ENCODE measurements at regions of chr7 and their contacts with region 1.

Region 1: GRCh38 chr7:12490117-12490688 is 80.3 kb upstream of the SCIN start:
- DNase-seq: peak in 1 of 2 experiments; percentile 53
- H3K4me3 ChIP-seq: no peak overlapping the region
- H3K27ac ChIP-seq: no peak overlapping the region
- H3K4me1 ChIP-seq: no peaks in the 10 kb centered on the region
- H3K27me3 ChIP-seq: no peaks in the 10 kb centered on the region
- CTCF ChIP-seq: peak; percentile 89

Region 2: GRCh38 chr7:11373546-11374142 is 1116.6 kb before region 1 on chr7:
- CTCF ChIA-PET with region 1: no interaction called
- POLR2A ChIA-PET with region 1: no interaction called
- intact Hi-C with region 1: loop called (anchors 5 kb)
- DNase-seq: no peak
- H3K4me3 ChIP-seq: no peak overlapping the region
- H3K27ac ChIP-seq: no peak overlapping the region
- H3K4me1 ChIP-seq: no peaks in the 10 kb centered on the region
- H3K27me3 ChIP-seq: no peaks in the 10 kb centered on the region
- CTCF ChIP-seq: peak; percentile 77

Region 3: GRCh38 chr7:11831736-11832495 is 658.3 kb before region 1 on chr7 and contains the start of gene THSD7A:
- CTCF ChIA-PET with region 1: interaction called, 4 read pairs
- POLR2A ChIA-PET with region 1: no interaction called
- intact Hi-C with region 1: loop called (anchors 1 kb)
- DNase-seq: peak in 1 of 2 experiments; percentile 68
- H3K4me3 ChIP-seq: peak within 1 kb of the TSS; percentile 53
- H3K27ac ChIP-seq: no peak within 1 kb of the TSS
- H3K4me1 ChIP-seq: no peaks in the 10 kb centered on the region; the same call in 1 of the 2 replicates
- H3K27me3 ChIP-seq: no peaks in the 10 kb centered on the region
- CTCF ChIP-seq: no peak; the same call in 1 of the 2 replicates
- total RNA-seq, gene THSD7A: 1.6 and 4.0 TPM in 2 replicates

Region 4: GRCh38 chr7:12007576-12007975 is 482.6 kb before region 1 on chr7:
- CTCF ChIA-PET with region 1: no interaction called
- POLR2A ChIA-PET with region 1: no interaction called
- intact Hi-C with region 1: no loop called
- DNase-seq: no peak
- H3K4me3 ChIP-seq: no peak overlapping the region
- H3K27ac ChIP-seq: no peak overlapping the region
- H3K4me1 ChIP-seq: no peaks in the 10 kb centered on the region
- H3K27me3 ChIP-seq: no peaks in the 10 kb centered on the region
- CTCF ChIP-seq: no peak

Region 5: GRCh38 chr7:12322284-12322902 is 167.8 kb before region 1 on chr7:
- CTCF ChIA-PET with region 1: interaction called, 3 read pairs
- POLR2A ChIA-PET with region 1: no interaction called
- intact Hi-C with region 1: loop called (anchors 5 kb)
- DNase-seq: no peak
- H3K4me3 ChIP-seq: no peak overlapping the region
- H3K27ac ChIP-seq: no peak overlapping the region
- H3K4me1 ChIP-seq: no peaks in the 10 kb centered on the region
- H3K27me3 ChIP-seq: no peaks in the 10 kb centered on the region
- CTCF ChIP-seq: peak; percentile 88

Region 6: DNA sequence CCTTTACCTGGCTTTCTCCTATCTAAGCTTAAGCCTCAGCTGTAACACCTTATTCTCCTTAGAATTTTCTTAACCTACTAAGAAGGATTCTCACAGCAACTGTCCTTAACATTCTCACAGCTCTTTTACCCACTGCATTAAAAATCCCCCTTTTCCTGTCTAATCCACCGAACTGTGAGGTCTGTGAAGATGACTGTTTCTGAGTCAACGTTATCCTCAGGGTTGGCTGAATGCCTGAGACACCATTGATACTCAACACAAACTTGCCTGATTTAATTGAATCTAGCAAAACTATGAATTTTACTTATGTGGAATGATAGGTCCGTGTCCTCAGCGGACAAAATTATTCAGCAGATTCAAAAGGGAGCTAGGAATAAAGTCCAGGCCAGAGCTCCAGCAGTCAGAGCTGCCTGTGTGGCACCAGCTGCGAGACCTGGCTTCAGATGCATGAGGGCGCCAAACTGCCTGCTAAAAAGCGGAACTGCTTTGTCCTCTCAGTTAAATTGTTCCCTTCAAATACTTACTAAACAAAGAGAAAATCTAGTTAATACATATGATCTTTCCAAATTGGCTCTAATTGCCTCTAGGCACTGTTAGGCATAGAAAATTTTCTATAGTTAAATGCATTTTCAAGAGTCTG is 53.2 kb before region 1 on chr7:
- CTCF ChIA-PET with region 1: interaction called, 4 read pairs
- POLR2A ChIA-PET with region 1: no interaction called
- intact Hi-C with region 1: loop called (anchors 10 kb)
- DNase-seq: no peak
- H3K4me3 ChIP-seq: no peak overlapping the region
- H3K27ac ChIP-seq: no peak overlapping the region
- H3K4me1 ChIP-seq: no peaks in the 10 kb centered on the region
- H3K27me3 ChIP-seq: no peaks in the 10 kb centered on the region
- CTCF ChIP-seq: no peak

Region 7: DNA sequence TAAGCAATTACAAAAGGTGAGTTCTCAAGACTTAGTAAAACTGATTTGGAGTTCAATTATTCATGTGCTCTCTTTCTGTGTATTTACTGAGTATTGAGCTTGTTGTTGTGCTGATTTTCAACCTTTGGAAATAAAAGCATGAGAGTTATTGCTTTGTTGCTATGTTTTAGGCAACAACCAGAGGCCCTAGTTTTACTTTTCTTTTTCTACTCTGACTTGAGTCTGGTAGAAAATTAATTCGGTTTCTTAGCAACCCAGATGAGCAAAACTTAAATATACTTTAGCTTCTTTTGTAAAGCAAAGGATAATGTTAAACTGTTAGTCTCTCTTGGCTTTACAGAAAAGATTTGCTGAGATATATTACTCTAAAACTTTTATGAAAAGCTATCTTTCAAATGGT is 13.9 kb after region 1 on chr7:
- CTCF ChIA-PET with region 1: interaction called, 13 read pairs
- POLR2A ChIA-PET with region 1: no interaction called
- intact Hi-C with region 1: no loop called
- DNase-seq: no peak
- H3K4me3 ChIP-seq: no peak overlapping the region
- H3K27ac ChIP-seq: no peak overlapping the region
- H3K4me1 ChIP-seq: no peaks in the 10 kb centered on the region
- H3K27me3 ChIP-seq: no peaks in the 10 kb centered on the region
- CTCF ChIP-seq: no peak